ENCODE measurements at regions of chr11 and their contacts with region 1.

Region 1: GRCh38 chr11:59171508-59172322 is at the start of gene DTX4:
- DNase-seq: peak; percentile 94
- H3K4me3 Mint-ChIP-seq: peak within 1 kb of the TSS; percentile 79
- H3K27ac Mint-ChIP-seq: peak within 1 kb of the TSS; percentile 13
- H3K4me1 Mint-ChIP-seq: peaks cover 7% of the 10 kb centered on the region
- H3K27me3 Mint-ChIP-seq: peaks cover 35% of the 10 kb centered on the region

Region 2: DNA sequence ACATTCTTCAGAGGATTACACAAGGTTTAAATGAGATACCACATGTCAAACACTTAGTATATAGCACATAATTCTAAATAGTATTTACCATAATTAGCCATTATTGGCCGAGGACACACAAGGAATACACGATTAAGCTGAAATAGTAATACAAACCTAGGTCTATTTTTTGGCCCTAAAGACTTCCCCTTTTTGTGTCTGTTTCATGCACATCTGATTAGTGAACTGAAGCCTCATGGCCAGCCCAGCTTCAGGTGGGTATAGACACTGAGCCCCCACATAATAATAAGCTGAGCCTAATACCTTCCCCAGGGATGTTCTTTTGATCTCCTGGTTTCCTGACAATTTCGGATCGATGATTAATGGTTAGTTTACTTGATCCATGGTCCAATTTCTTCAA is 83.6 kb before region 1 on chr11:
- CTCF ChIA-PET with region 1: no interaction called
- DNase-seq: no peak
- H3K4me3 Mint-ChIP-seq: no peak overlapping the region
- H3K27ac Mint-ChIP-seq: no peak overlapping the region
- H3K4me1 Mint-ChIP-seq: no peaks in the 10 kb centered on the region
- H3K27me3 Mint-ChIP-seq: peaks cover 13% of the 10 kb centered on the region

Region 3: DNA sequence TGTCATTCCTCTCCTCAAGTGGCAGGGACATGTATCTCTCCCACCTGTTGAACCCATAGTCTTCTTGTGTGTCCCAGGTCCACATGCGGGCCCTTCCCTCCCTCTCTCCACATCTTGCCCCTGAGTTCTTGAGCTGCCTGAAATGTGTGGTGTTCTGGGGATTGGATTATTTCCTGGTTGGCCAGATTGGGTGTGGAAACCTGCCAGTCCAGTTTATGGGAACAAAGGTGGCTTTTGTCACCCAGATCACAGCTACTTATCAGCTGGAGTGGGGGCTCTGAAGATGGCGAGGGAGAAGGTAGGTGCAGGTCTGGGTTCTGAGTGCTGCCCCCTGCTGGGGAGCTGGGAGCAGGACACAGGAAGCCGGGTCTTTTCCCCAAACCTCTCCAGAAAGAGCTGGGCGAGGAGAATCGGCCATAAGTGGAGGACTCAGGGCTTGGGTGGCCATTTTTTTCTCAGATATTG is 14.4 kb after region 1 on chr11:
- CTCF ChIA-PET with region 1: interaction called, 49 read pairs
- DNase-seq: peak; percentile 62
- H3K4me3 Mint-ChIP-seq: no peak overlapping the region
- H3K27ac Mint-ChIP-seq: no peak overlapping the region
- H3K4me1 Mint-ChIP-seq: no peaks in the 10 kb centered on the region
- H3K27me3 Mint-ChIP-seq: peaks cover 19% of the 10 kb centered on the region

Region 4: GRCh38 chr11:59206635-59207034 is 34.9 kb after region 1 on chr11:
- CTCF ChIA-PET with region 1: interaction called, 20 read pairs
- DNase-seq: peak; percentile 36
- H3K4me3 Mint-ChIP-seq: no peak overlapping the region
- H3K27ac Mint-ChIP-seq: no peak overlapping the region
- H3K4me1 Mint-ChIP-seq: peaks cover 12% of the 10 kb centered on the region
- H3K27me3 Mint-ChIP-seq: peaks cover 41% of the 10 kb centered on the region

Region 5: GRCh38 chr11:59429924-59430516 is 258.3 kb after region 1 on chr11:
- CTCF ChIA-PET with region 1: interaction called, 32 read pairs
- DNase-seq: peak; percentile 50
- H3K4me3 Mint-ChIP-seq: no peak overlapping the region
- H3K27ac Mint-ChIP-seq: no peak overlapping the region
- H3K4me1 Mint-ChIP-seq: no peaks in the 10 kb centered on the region
- H3K27me3 Mint-ChIP-seq: peaks cover 2% of the 10 kb centered on the region

Measured in activated naive CD4-positive, alpha-beta T cell treated with anti-CD3 and anti-CD28 coated beads, Interleukin-2, amount 10 ng/mL, durations not matched to agents 7 days and 5 days (primary cell).